ENCODE measurements at regions of chr11 and their contacts with region 1.

Region 1: GRCh38 chr11:64553551-64554201 is 37.3 kb upstream of the SLC22A12 start:
- DNase-seq: peak; percentile 33 to 68 (median 59)
- ATAC-seq: peak; percentile 63 to 76 (median 70)
- H3K4me3 ChIP-seq: no peak overlapping the region
- H3K27ac ChIP-seq: peak overlapping the region in 2 of 3 donors; percentile 31 to 61
- H3K4me1 ChIP-seq: peaks cover 0 to 21% (median 0%) of the 10 kb centered on the region in 4 donors
- H3K27me3 ChIP-seq: no peaks in the 10 kb centered on the region
- CTCF ChIP-seq: peak; percentile 92 to 99 (median 96)
- POLR2A ChIP-seq: no peak

Region 2: DNA sequence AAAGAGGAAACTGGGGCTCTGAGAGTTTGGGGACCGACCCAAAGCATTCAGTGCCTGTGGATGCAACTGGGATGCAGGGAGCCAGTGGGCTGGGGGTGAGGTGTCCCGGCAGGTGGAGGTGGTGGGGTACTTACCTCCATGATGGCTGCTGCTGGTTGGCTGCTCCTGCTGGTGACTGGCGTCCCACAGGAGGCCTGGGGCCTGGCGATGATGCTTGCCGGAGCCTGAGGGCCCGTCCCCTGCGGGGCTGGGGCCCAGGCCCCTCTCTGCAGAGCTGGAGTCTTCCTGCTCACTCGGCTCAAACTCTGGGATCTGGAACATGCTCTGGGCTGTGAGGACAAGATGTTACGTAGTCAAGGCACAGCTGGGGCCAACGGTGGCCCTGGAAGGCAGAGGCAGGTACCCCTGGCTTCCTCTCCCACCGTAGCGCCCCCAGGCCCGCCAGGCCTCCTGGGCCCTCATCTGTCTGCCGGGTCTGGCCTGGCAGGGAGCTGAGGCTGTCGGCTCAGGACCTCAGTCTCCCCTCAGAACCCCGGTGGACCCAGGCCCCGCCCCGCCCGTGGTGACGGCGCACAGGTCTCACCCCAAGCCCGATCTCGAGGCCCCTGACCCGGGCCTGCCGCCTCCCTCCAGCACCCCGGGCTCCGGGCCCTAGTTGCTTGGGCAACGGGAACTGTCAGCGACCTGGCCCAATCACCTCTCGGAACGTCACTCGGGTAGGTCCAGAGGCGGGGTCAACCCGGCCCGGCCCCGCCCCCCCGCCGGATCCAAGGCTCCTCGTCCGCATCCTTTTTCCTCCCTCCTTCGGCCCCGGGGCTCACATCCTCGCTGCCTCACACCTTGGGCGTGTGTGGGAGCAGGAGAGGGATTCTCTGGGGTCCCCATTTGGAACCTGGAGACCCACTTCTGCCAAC is 269.4 kb before region 1 on chr11 and contains the start of gene BAD:
- intact Hi-C with region 1: no loop called
- DNase-seq: peak; percentile 96 to 98 (median 98)
- ATAC-seq: peak; percentile 89 to 94 (median 90)
- H3K4me3 ChIP-seq: peak within 1 kb of the TSS; percentile 65 to 96 (median 93)
- H3K27ac ChIP-seq: peak within 1 kb of the TSS; percentile 79 to 95 (median 83)
- H3K4me1 ChIP-seq: peaks cover 0 to 12% (median 6%) of the 10 kb centered on the region in 4 donors
- H3K27me3 ChIP-seq: no peaks in the 10 kb centered on the region
- CTCF ChIP-seq: no peak
- POLR2A ChIP-seq: peak; percentile 36
- total RNA-seq, gene BAD: 22.0 to 53.8 (median 26.0) TPM

Region 3: GRCh38 chr11:64304316-64305072 is 249.2 kb before region 1 on chr11:
- intact Hi-C with region 1: no loop called
- DNase-seq: peak; percentile 93 to 95 (median 94)
- ATAC-seq: peak; percentile 38 to 46 (median 43)
- H3K4me3 ChIP-seq: peak overlapping the region; percentile 47 to 77 (median 68)
- H3K27ac ChIP-seq: peak overlapping the region; percentile 88 to 99 (median 97)
- H3K4me1 ChIP-seq: peaks cover 0 to 39% (median 13%) of the 10 kb centered on the region in 4 donors
- H3K27me3 ChIP-seq: peaks cover 0 to 9% of the 10 kb centered on the region in 2 donors
- CTCF ChIP-seq: peak; percentile 82 to 91 (median 90)
- POLR2A ChIP-seq: peak; percentile 17

Region 4: DNA sequence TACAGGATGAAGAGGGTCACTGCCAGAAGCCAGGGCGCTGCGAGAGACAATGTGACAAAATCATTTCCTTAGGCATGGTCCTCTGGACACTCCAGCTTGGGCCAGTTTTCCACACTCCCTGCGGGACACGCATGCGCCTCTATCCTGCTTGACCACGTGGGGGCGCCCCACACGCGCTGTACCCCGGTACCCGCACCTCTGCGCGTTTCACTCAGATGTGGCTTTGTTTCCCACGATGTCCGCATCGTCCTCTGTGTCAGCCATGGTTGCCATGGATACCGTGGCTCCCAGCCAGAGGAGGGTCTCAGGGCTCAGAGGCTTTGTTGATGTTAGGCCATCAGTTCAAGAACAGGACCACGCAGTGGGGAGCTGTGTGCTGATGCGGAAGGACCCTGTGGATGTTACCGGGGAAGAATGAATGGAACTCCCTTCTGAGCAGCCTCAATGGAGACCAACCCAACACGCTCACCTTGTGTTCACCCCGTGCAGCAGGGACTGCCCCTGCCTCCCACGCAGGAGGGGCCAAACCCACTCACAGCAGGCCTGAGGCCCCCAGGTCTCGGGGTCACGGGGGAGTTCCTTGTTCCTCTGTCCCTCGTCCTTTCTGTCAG is 63.7 kb before region 1 on chr11:
- intact Hi-C with region 1: no loop called
- DNase-seq: peak; percentile 53 to 64 (median 59)
- ATAC-seq: peak; percentile 70 to 81 (median 72)
- H3K4me3 ChIP-seq: no peak overlapping the region
- H3K27ac ChIP-seq: no peak overlapping the region
- H3K4me1 ChIP-seq: no peaks in the 10 kb centered on the region
- H3K27me3 ChIP-seq: no peaks in the 10 kb centered on the region
- CTCF ChIP-seq: peak; percentile 36 to 68 (median 46)
- POLR2A ChIP-seq: no peak

Region 5: DNA sequence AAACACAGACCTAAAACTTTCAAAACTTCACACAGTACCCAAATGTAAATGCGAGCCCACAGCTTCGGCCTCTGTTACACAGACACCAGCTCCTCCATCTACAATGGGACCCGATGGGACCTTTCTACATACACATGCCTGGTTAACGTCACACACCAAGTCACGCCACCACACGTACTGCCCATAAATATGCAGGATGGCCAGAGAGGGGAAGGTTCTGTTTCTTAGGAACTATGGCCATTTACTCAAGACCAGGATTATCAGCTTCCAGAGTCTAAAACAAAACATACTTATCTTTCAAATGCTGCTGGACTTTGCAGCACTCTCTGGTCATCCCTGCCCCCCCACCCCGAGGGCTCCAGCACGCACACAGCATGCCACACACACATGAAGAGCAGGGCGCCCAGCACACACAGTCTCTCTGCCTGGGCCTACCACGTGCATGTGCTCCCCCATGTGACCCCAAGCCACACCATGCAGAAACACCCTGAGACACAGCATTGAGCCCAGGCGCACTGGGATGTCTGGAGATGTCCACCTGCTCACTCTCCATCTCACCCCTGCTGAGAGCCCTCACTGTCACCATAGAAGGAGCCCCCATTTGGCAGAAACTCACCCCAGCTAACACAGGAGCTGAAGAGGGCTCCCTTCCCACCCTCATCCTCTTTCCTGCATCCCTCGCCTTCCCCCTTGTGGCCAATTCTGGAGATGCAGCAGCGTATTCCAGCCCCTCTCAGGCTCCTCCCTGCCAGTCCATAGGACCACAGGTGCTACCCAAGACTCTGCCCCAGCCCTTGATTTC is 99.1 kb after region 1 on chr11:
- intact Hi-C with region 1: loop called in 1 of 2 experiments (anchors 5 kb)
- DNase-seq: peak in 2 of 3 donors; percentile 68 to 78
- ATAC-seq: peak; percentile 62 to 86 (median 72)
- H3K4me3 ChIP-seq: no peak overlapping the region
- H3K27ac ChIP-seq: no peak overlapping the region
- H3K4me1 ChIP-seq: peaks cover 0 to 23% (median 4%) of the 10 kb centered on the region in 4 donors
- H3K27me3 ChIP-seq: no peaks in the 10 kb centered on the region
- CTCF ChIP-seq: peak; percentile 80 to 87 (median 84)
- POLR2A ChIP-seq: no peak

Region 6: GRCh38 chr11:64767344-64768299 is 213.9 kb after region 1 on chr11:
- intact Hi-C with region 1: no loop called
- DNase-seq: peak in 1 of 3 donors; percentile 59
- ATAC-seq: peak; percentile 35 to 53 (median 42)
- H3K4me3 ChIP-seq: no peak overlapping the region
- H3K27ac ChIP-seq: no peak overlapping the region
- H3K4me1 ChIP-seq: no peaks in the 10 kb centered on the region
- H3K27me3 ChIP-seq: no peaks in the 10 kb centered on the region
- CTCF ChIP-seq: peak; percentile 60 to 70 (median 62)
- POLR2A ChIP-seq: no peak

Measured in right lobe of liver (tissue), 6 donors.